ENCODE measurements at regions of chr1 and their contacts with region 1.

Region 1: DNA sequence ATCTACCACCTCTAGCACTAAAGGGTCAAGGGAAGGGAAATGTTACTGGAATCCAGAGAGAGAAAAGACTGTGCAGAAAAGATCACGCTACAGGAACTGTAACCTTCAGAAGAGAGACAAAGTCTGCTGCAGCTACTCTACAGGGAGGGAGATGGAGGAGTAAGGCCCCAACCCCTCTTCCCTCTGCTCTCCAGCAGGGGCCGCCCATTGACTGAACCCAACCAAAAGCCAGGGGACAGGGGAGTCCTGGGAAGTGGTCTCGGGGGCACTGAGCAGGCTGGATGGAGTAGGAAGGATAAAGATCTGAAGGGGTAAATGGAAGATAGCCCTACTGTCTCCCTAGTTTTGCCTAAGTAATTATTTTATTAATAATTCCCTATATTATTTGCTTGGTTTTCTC is 72.8 kb upstream of the NR5A2 start:
- DNase-seq: peak; percentile 10
- ATAC-seq: peak; percentile 99
- H3K4me3 ChIP-seq: no peak overlapping the region
- H3K27ac ChIP-seq: no peak overlapping the region
- H3K4me1 ChIP-seq: no peaks in the 10 kb centered on the region
- H3K27me3 ChIP-seq: no peaks in the 10 kb centered on the region
- CTCF ChIP-seq: peak; percentile 72
- EP300 ChIP-seq: no peak
- POLR2A ChIP-seq: no peak
- RAD21 ChIP-seq: no peak

Region 2: GRCh38 chr1:200040481-200041138 is 85.9 kb after region 1 on chr1:
- CTCF ChIA-PET with region 1: no interaction called
- POLR2A ChIA-PET with region 1: no interaction called
- in situ Hi-C with region 1: no loop called
- intact Hi-C with region 1: loop called (anchors 10 kb)
- DNase-seq: peak; percentile 77
- ATAC-seq: peak; percentile 94
- H3K4me3 ChIP-seq: peak overlapping the region; percentile 50 to 64 (median 51); a peak in 4 of 6 replicates
- H3K27ac ChIP-seq: no peak overlapping the region
- H3K4me1 ChIP-seq: peaks cover 47% of the 10 kb centered on the region
- H3K27me3 ChIP-seq: peaks cover 13 to 70% of the 10 kb centered on the region in 2 experiments
- CTCF ChIP-seq: no peak
- EP300 ChIP-seq: peak; percentile 8 to 37; a peak in 2 of 4 replicates
- POLR2A ChIP-seq: peak in 1 of 2 experiments; percentile 67; a peak in 2 of 4 replicates
- RAD21 ChIP-seq: no peak